ENCODE measurements at regions of chr11 and their contacts with region 1.

Region 1: DNA sequence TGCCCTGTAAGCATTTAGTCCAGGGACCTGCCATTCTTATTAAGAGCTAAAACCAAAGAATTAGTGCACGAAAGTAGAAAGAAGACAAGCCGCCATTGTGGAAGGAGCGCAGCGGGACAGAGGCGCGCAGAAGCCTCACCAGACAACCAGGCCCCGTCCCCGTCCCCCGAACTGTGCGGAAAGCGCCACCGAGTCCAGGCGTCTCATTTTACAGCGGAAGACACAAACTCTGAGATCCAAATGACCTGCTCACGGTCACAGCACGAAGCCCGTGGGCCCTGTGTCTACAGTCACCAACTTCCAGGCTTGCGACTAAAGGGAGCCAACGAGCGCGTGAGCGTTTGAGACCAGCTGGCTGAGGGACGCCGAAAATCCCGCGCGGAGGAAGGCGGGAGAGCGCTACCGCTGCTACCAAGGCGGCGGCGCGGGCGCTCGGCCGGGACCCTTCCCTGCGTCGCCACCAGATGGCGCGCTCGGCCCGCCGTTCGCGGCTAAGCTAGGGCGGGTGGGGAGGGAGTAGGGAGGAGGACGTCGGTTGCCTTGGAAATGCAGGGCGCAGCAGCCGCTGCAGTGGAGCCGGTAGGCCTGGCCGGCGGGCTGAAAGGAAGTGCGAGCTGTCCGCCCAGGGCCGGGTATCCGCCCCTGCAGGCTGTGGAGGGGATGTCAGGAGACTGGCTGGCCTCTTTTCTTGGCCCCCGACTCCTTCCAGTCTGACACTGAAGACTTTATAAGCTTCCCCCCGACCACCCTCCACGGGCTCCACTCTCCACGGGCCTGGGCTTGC is 434 bp upstream of the CCDC83 start:
- DNase-seq: peak; percentile 86 to 94
- H3K4me3 ChIP-seq: peak overlapping the region; percentile 65
- H3K27ac ChIP-seq: peak overlapping the region; percentile 48
- H3K4me1 ChIP-seq: peaks cover 8% of the 10 kb centered on the region
- H3K27me3 ChIP-seq: no peaks in the 10 kb centered on the region
- CTCF ChIP-seq: peak; percentile 91

Region 2: DNA sequence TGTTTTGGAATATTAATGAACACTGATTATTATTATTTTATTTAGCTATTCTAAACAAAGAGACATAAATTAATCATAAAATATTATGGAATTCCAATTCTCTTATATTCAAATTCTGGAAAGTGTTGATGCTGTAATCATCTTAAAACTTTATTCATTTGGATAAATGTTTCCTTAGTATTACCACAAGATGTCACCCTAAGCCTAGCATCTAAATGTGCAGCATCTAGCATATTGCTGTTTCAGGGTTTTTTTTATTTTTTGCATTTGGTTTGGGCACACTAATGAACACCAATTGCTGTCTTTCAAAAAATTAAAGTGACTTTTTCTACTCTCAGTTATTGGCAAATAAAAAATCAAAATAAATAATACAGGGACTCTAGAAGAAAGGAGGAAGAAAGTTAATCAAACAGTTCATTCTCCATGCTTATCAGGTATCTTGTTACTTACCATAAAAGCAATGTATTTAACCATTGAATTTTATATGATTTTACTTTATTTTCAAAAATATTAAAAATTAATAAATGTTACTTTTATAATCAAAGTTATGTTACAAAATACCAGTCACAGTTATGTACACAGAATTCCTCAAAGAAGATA is 259.4 kb before region 1 on chr11:
- CTCF ChIA-PET with region 1: no interaction called
- POLR2A ChIA-PET with region 1: no interaction called
- intact Hi-C with region 1: loop called (anchors 1 kb)
- DNase-seq: peak in 1 of 2 experiments; percentile 51
- H3K4me3 ChIP-seq: no peak overlapping the region
- H3K27ac ChIP-seq: no peak overlapping the region
- H3K4me1 ChIP-seq: no peaks in the 10 kb centered on the region
- H3K27me3 ChIP-seq: no peaks in the 10 kb centered on the region
- CTCF ChIP-seq: peak; percentile 82

Region 3: DNA sequence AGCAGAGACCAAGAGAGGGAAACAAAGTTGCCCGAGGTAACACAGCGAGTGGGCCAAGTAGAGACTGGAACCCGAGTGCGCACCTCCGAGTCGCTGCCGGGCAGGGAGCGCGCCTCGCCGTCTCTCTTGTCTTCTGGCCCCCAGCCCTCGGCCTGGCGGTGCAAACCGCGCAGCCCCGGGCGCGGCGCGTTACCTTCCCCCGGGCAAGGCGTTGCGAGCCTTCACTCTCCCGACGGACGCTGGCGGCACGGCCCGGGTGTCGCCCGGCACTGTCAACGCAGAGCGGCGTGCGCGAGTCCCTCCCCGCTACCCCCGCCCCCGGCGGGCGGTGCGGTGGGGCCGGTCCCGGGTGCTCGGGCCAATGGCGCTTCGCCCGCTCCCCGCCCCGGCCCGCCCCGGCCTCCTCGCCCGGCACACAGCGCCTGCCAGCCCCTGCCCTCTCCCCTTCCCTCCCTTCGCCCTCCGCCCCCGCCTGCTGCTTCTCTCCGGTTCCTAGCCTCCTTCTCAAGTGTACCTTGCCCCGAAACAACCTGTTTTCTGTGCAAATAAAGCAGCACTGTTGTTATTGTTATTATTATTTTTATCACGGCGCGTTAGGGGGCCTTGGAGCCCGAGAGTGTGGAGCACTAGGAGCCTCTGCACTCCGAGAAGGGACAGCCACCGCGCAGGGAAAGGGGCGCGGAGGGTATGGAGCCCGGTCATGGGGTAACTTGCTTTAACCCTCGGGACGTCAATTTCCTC is 43.7 kb before region 1 on chr11 and contains the start of gene SYTL2:
- CTCF ChIA-PET with region 1: no interaction called
- POLR2A ChIA-PET with region 1: no interaction called
- intact Hi-C with region 1: loop called (anchors 1 kb)
- DNase-seq: peak; percentile 73 to 76
- H3K4me3 ChIP-seq: peak within 1 kb of the TSS; percentile 81
- H3K27ac ChIP-seq: no peak within 1 kb of the TSS
- H3K4me1 ChIP-seq: peaks cover 34% of the 10 kb centered on the region
- H3K27me3 ChIP-seq: no peaks in the 10 kb centered on the region
- CTCF ChIP-seq: no peak
- total RNA-seq, gene SYTL2: 13.3 and 16.0 TPM in 2 replicates

Region 4: DNA sequence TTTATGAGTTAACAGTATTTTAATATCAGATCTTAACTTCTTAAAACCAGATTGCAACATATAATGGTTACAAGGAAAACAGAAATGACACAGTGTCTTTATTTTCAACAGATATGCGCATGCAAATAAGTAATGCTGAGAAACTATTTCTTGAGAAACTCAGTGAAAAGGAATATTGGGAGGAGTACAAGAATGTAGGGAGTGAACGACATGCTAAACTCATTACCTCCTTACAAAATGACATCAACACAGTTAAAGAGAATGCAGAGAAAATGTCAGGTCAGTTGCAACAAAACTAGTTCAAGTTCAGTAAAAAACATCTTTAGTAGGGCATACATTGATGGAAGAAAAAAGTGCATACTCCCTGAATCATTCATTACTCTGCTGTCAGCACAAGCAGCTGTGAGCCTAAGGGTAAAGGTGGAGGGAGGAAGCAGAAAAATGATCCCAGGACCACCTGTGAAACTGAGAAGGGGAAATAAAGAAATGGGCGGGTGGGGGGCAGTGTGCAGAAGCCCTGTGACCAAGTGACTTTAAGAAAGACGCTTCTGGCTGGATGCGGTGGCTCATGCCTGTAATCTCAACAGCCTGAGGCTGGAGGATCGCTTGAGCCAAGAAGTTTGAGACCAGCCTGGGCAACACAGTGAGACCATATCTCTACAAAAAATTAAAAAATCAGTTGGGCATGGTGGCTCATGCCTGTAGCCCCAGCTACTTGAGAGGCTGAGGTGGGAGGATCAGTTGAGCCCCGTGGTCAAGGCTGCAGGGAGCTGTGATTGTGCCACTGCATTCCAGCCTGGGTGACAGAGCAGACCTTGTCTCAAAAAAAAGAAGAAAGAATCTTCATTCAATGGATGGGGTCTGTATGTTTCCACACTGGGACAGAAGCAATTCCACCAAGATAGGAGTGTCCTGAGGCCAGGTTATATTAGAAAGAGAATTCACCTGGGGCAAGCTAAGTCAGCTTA is 31.6 kb after region 1 on chr11:
- CTCF ChIA-PET with region 1: no interaction called
- POLR2A ChIA-PET with region 1: no interaction called
- intact Hi-C with region 1: no loop called
- DNase-seq: no peak
- H3K4me3 ChIP-seq: no peak overlapping the region
- H3K27ac ChIP-seq: no peak overlapping the region
- H3K4me1 ChIP-seq: peaks cover 36% of the 10 kb centered on the region
- H3K27me3 ChIP-seq: no peaks in the 10 kb centered on the region
- CTCF ChIP-seq: no peak

Region 5: DNA sequence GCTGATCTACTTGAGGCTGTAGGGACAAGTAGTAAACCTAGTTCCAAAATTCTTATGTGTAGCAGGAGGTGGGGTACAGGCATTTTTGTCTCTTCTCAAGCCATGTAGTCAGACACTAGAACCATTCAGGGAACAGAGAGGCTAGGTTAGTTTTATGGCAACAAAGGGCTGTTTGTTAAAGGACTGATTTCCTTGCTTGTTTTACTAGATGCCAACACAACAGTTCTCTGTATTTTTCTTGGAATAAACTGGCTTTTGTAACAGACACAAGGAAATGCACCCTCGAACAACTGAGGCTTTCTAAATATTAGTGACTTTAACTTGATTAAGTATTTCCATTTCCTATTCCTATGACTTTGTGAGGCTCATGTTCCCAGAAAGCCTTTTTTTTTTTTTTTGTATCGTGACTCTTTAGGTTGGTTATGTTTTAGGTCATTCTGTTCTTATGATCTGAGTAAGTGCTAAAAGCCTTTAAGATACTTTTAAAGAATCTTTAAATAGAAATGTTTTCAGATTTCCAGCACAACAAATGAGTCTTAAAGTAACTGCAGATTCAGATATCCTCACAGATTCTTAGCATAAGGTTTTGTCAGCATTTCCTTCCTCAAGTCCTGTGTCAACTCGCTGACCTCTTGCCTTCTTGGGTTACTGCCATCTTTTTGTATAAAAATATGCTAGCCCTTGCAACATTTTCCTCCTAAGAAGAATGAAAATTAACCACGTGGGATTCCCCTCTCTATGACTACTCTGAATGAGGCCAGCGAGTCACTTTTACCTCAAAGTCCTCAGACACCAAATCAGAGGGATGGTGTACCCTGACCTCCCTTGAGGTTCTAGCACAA is 92.9 kb after region 1 on chr11:
- CTCF ChIA-PET with region 1: no interaction called
- POLR2A ChIA-PET with region 1: no interaction called
- intact Hi-C with region 1: loop called (anchors 2 kb)
- DNase-seq: peak; percentile 38 to 86
- H3K4me3 ChIP-seq: no peak overlapping the region
- H3K27ac ChIP-seq: peak overlapping the region; percentile 35; the same call in 1 of the 2 replicates
- H3K4me1 ChIP-seq: peaks cover 26% of the 10 kb centered on the region
- H3K27me3 ChIP-seq: no peaks in the 10 kb centered on the region
- CTCF ChIP-seq: no peak

Region 6: DNA sequence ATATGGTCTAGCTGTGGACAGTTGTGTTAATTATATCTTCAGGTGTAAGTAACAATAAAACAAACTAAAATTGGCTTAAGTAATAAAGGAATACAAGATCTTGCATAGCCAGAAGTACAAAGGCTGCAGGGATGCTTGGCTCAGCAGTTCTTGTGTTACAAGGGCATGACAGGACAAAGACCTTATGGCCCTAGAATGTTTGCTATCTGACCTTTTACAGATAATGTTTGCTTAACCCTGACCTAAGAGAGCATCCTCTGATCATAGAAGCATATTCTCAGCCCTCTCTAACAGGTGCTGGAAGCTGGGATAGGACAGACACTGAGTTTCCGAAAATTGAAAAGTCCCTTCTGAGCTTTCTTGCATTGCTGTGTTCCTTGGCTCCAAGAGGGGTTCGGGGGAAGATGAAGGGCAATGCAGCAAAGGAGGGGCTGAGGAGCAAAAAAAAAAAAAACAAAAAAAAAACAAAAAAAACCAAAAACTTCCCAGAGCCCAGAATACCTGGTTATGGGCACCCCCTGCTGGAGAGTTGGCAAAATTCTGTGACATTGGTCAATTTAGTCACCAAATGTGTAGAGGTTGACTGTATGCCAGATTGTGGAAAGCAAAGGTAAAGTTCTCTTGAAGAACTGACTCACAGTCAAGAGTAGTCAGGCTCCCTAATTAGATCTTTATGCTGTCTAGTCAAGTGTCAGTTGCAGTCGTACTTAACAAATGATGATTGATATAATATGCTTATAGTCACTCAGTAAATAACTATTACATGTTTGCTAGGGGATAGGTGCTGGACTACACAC is 436.9 kb after region 1 on chr11:
- CTCF ChIA-PET with region 1: interaction called, 9 read pairs
- POLR2A ChIA-PET with region 1: no interaction called
- intact Hi-C with region 1: loop called (anchors 1 kb)
- DNase-seq: peak; percentile 41 to 60
- H3K4me3 ChIP-seq: no peak overlapping the region
- H3K27ac ChIP-seq: no peak overlapping the region
- H3K4me1 ChIP-seq: no peaks in the 10 kb centered on the region
- H3K27me3 ChIP-seq: no peaks in the 10 kb centered on the region
- CTCF ChIP-seq: peak; percentile 95